Mammary epithelial cell (primary cell): ENCODE measurements at regions of chr1 and their contacts with region 1.

Region 1: GRCh38 chr1:96236156-96236739 is 485.3 kb upstream of the PTBP2 start:
- DNase-seq: peak; percentile 38
- H3K4me3 ChIP-seq: no peak overlapping the region
- H3K27ac ChIP-seq: no peak overlapping the region
- H3K4me1 ChIP-seq: no peaks in the 10 kb centered on the region
- H3K27me3 ChIP-seq: no peaks in the 10 kb centered on the region
- CTCF ChIP-seq: peak; percentile 44 to 62

Region 2: DNA sequence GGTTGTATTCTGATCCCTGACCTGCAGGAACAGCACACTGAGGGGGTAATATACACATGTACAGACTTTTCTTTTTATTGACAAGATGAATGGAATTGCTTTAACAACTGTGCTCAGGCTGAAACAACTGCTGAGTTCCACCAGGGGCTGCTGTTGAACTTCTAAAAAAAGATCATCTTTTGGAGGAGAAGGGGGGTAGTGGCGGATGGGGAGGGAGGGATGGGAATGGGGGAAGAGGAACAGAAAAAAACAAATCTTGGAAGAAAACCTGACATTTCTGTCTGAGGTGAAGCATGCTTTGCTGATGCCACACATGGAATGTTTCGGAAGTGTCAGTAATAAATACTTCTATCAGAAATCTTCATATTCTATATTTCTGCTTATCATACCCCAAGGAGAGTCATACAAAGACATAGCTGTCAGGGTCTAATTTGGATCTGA is 927.2 kb before region 1 on chr1:
- CTCF ChIA-PET with region 1: no interaction called
- dilution Hi-C with region 1: no loop called
- in situ Hi-C with region 1: no loop called
- intact Hi-C with region 1: loop called (anchors 2 kb)
- DNase-seq: peak; percentile 28
- H3K4me3 ChIP-seq: no peak overlapping the region
- H3K27ac ChIP-seq: no peak overlapping the region
- H3K4me1 ChIP-seq: no peaks in the 10 kb centered on the region
- H3K27me3 ChIP-seq: peaks cover 5% of the 10 kb centered on the region
- CTCF ChIP-seq: peak; percentile 63 to 73

Region 3: DNA sequence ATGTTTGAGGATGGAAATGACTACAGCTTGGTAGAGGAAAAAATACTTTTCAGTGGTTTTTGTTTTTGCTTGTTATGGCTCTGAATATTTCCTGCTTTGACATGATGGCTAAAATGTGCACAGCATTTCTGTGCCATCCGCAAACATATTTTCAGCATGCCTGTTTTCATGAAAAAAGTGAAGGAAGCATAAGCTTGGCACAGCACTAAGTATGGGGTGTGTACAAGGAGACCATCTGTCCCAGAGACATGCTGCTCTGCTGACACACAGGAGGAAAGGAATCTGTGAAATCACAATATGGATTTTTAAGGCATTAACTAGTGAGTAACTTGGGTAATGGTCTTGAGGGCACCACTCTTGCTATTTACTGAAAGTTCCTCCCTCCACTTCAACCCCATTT is 406.7 kb before region 1 on chr1:
- CTCF ChIA-PET with region 1: no interaction called
- dilution Hi-C with region 1: no loop called
- in situ Hi-C with region 1: no loop called
- intact Hi-C with region 1: no loop called
- DNase-seq: no peak
- H3K4me3 ChIP-seq: no peak overlapping the region
- H3K27ac ChIP-seq: no peak overlapping the region
- H3K4me1 ChIP-seq: no peaks in the 10 kb centered on the region
- H3K27me3 ChIP-seq: no peaks in the 10 kb centered on the region
- CTCF ChIP-seq: no peak

Region 4: DNA sequence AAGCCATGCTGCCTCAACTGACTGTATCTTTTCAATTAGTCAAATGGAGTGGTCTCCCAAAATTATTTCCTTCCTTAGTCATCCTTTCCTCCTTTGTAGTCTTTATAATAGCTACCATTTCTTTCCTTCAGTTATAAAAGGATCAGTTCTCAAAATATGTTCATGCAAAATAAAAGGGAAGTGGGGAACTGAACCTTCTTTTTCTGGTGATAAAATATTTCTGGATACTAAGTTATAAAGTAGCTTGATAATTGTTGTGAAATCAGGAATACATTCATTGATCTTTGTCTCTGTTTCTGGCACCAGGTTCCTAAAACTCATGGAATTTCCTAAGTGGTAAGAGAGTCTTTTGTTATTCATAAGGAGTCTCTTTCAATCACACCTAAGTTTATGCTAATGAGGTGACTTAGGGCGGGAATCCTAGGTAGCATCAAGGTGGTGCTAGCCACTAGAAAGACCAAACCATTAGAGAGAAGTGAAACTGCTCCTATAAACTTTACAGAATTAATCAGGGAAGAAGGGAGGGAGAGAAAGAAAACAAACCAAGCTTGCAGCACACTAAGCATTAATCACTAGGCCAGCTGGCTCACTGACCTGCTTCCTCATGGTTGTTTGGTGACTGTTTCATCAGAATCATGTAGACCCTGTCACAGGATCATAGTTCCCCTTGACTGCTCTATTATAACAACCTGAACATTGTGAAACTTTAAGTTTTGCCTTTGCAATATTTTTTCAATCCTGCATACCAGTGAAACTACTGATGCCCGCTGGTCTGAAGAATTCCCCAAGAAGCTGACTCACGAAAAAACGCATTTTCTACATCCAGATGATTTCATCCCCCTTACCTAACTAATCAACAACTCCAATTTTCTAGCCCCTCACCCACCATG is 323.7 kb after region 1 on chr1:
- CTCF ChIA-PET with region 1: no interaction called
- dilution Hi-C with region 1: no loop called
- in situ Hi-C with region 1: no loop called
- intact Hi-C with region 1: loop called (anchors 5 kb)
- DNase-seq: peak; percentile 99
- H3K4me3 ChIP-seq: no peak overlapping the region
- H3K27ac ChIP-seq: peak overlapping the region; percentile 88
- H3K4me1 ChIP-seq: peaks cover 17% of the 10 kb centered on the region
- H3K27me3 ChIP-seq: no peaks in the 10 kb centered on the region
- CTCF ChIP-seq: no peak

Region 5: DNA sequence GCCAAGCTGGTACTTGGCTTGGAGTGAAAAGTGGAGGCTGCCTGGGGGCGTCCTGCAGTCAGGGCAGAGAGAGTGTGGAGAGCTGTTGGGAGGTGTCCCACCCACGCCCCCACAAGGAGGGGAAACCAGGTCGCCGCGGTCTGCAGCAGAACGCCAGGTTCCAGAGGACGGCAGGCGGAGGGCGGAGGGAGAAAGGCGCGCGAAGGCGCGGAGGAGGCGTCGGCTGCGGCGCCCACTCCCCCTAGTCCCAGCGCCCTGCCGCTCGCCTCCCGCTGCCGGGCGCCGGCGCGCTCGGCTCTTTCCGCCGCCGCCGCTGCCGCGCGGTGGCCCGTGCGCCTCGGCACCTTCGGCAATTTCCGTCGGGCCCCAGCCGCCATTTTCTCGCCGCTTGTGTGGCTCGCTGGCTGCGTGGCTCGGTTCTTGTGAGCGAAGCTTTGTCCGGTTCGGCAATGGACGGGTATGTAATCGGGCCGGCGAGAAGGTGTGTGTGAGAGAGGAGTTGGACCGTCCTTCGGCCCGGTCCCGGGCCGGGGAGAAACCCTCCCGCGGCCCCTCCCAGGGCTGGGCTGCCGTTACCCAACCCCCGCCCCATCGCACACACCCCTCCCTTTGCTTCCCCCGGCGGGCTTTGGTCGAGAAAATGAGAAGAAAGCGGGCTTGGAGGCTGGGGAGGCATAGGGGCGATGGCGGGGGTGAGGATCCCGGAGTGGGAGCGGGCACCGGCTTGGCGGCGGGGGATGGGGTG is 485.3 kb after region 1 on chr1 and contains the start of gene PTBP2:
- CTCF ChIA-PET with region 1: no interaction called
- dilution Hi-C with region 1: no loop called
- in situ Hi-C with region 1: no loop called
- intact Hi-C with region 1: loop called (anchors 5 kb)
- DNase-seq: peak; percentile 71
- H3K4me3 ChIP-seq: peak within 1 kb of the TSS; percentile 82 to 98 (median 91)
- H3K27ac ChIP-seq: peak within 1 kb of the TSS; percentile 60
- H3K4me1 ChIP-seq: no peaks in the 10 kb centered on the region
- H3K27me3 ChIP-seq: no peaks in the 10 kb centered on the region
- CTCF ChIP-seq: no peak
- total RNA-seq, gene PTBP2: 13.0 to 13.6 TPM

Region 6: DNA sequence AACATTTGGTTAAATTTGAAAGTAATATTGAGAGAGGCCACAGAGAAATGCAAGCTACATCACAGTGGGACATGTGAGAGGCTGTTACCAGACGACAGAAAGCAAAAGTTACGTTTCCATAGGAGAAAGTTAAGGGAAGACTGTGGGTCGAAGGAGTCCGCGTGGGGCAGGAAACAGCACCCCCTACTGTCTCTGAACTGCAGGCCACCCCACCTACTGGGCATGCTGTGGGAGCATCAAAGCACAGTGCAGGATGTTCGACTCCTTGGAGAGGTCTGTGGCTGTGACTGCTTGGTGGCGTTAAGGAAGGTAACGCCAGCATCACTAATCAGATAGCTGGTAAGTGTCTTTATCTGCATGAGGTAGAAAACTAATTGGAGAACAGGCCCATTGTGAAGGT is 609.2 kb after region 1 on chr1:
- CTCF ChIA-PET with region 1: no interaction called
- dilution Hi-C with region 1: no loop called
- in situ Hi-C with region 1: no loop called
- intact Hi-C with region 1: loop called (anchors 2 kb)
- DNase-seq: peak; percentile 12
- H3K4me3 ChIP-seq: no peak overlapping the region
- H3K27ac ChIP-seq: no peak overlapping the region
- H3K4me1 ChIP-seq: no peaks in the 10 kb centered on the region
- H3K27me3 ChIP-seq: no peaks in the 10 kb centered on the region
- CTCF ChIP-seq: peak; percentile 64 to 71

Region 7: GRCh38 chr1:96966536-96967138 is 730.4 kb after region 1 on chr1:
- CTCF ChIA-PET with region 1: no interaction called
- dilution Hi-C with region 1: no loop called
- in situ Hi-C with region 1: no loop called
- intact Hi-C with region 1: loop called (anchors 2 kb)
- DNase-seq: peak; percentile 60
- H3K4me3 ChIP-seq: peak overlapping the region; percentile 32 to 45 (median 42)
- H3K27ac ChIP-seq: no peak overlapping the region
- H3K4me1 ChIP-seq: no peaks in the 10 kb centered on the region
- H3K27me3 ChIP-seq: peaks cover 3% of the 10 kb centered on the region
- CTCF ChIP-seq: peak; percentile 95 to 97